ENCODE measurements at regions of chr19 and their contacts with region 1.

Region 1: GRCh38 chr19:55653758-55654539 is 886 bp upstream of the U2AF2 start:
- DNase-seq: peak; percentile 99
- ATAC-seq: peak; percentile 85
- H3K4me3 ChIP-seq: peak overlapping the region; percentile 85 to 99 (median 97)
- H3K27ac ChIP-seq: peak overlapping the region; percentile 99
- H3K4me1 ChIP-seq: peaks cover 30% of the 10 kb centered on the region
- H3K27me3 ChIP-seq: no peaks in the 10 kb centered on the region; a peak in 1 of 5 replicates
- CTCF ChIP-seq: peak; percentile 99
- EP300 ChIP-seq: 0 out of 4 replicates have a peak, but pooled peaks of 1 of the 2 experiments have one; percentile 35
- POLR2A ChIP-seq: peak; percentile 54 to 80; a peak in 3 of 4 replicates
- RAD21 ChIP-seq: peak; percentile 79

Region 2: GRCh38 chr19:55611983-55612645 is 41.8 kb before region 1 on chr19:
- CTCF ChIA-PET with region 1: no interaction called
- POLR2A ChIA-PET with region 1: no interaction called
- in situ Hi-C with region 1: no loop called
- intact Hi-C with region 1: no loop called
- DNase-seq: no peak
- ATAC-seq: no peak
- H3K4me3 ChIP-seq: no peak overlapping the region
- H3K27ac ChIP-seq: no peak overlapping the region
- H3K4me1 ChIP-seq: peaks cover 9% of the 10 kb centered on the region
- H3K27me3 ChIP-seq: no peaks in the 10 kb centered on the region
- CTCF ChIP-seq: no peak
- EP300 ChIP-seq: no peak
- POLR2A ChIP-seq: no peak
- RAD21 ChIP-seq: no peak

Region 3: DNA sequence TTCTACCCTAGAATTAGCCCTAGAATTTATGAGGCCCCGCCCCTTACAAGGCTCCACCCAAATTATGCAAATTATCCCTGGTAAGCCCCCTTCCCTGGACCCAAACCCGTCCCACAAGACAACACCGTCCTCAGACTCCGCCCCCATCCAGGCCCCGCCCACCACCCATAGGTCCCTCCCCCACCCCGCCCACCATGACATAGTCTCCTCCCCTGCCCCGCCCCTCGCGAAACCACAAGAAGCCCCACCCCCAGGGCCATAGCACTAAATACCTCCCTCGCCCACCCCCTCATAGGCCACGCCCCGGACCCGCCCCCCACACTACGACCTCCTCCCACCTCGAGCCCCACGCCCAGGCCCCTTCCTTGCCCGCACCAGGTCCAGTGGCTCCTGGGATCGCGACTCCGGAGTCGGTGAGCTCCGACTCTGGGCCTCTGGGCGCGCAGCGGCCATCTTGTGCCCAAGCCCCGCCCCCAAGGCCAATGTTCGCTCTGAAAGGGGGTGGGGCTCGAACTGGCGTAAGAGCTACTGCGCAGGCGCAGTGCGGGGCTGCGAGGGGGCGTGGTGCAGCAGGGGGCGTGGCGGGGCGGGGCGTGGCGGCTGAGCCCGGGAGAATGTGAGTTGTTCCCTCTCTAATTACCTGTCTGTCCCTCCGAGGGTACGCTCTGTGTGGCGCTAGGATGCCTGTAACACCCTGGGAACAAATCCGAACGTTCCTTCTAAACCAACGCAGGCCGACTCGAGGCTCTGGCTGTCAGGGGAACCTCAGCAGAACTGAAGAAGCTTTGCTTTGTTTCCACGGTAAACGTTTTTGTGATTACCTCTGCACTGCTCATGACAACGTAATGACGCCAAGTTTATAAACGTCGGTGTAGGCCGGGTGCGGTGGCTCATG is 29.6 kb before region 1 on chr19 and contains the start of gene ZNF784:
- CTCF ChIA-PET with region 1: no interaction called
- POLR2A ChIA-PET with region 1: interaction called, 11 read pairs
- in situ Hi-C with region 1: no loop called
- intact Hi-C with region 1: no loop called
- DNase-seq: peak; percentile 82
- ATAC-seq: peak; percentile 70
- H3K4me3 ChIP-seq: peak within 1 kb of the TSS; percentile 65 to 82 (median 70)
- H3K27ac ChIP-seq: peak within 1 kb of the TSS; percentile 98
- H3K4me1 ChIP-seq: peaks cover 27% of the 10 kb centered on the region
- H3K27me3 ChIP-seq: no peaks in the 10 kb centered on the region
- CTCF ChIP-seq: peak; percentile 22; the same call in 1 of the 2 replicates
- EP300 ChIP-seq: no peak
- POLR2A ChIP-seq: peak; percentile 74 to 88
- RAD21 ChIP-seq: no peak
- total RNA-seq, gene ZNF784: 4.0 and 4.2 TPM in 2 replicates

Region 4: DNA sequence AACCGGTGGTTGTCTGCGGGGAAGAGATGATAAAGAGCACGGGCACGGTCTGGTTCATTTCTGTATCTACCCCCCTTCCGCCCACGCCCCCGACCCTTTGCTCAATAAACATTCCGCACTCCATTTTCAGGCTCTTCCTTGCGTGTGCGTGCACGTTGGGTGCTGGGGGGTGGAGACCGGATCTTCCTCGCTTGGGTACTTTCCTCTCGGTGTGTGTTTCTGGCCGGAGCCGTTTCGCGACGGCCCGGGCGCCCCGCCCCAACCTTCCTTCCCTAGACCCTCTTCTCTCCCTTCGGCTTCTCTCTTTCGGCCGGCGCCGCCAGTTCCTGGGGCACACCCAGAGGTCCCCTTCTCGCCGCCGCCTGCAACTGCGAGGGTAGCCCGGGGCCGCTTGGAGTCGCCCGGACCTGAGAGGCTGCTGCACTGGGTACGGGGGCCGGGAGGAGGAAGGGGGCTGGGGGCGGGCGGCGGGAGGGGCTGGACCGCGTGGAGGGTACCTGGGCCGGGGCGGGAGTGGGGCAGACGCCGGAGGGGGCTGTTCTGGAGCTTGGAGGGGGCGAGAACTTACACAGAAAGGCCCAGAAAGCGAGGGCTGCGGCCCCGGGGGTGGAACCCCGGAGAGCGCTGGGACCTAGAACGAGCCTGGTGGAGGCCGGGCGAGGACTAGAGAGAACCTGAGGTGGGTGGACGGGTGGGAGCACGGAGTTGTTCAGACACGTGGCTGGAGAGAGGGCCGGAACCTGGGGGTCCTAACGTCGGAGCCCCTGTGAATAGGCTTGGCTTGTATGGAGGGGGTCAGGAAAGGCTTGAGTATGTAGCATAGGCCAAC is 10.4 kb before region 1 on chr19 and contains the start of gene ZNF581:
- CTCF ChIA-PET with region 1: interaction called, 3 read pairs
- POLR2A ChIA-PET with region 1: interaction called, 19 read pairs
- in situ Hi-C with region 1: no loop called
- intact Hi-C with region 1: no loop called
- DNase-seq: peak; percentile 57
- ATAC-seq: peak; percentile 47
- H3K4me3 ChIP-seq: peak within 1 kb of the TSS; percentile 92 to 96 (median 92)
- H3K27ac ChIP-seq: peak within 1 kb of the TSS; percentile 79
- H3K4me1 ChIP-seq: peaks cover 59% of the 10 kb centered on the region
- H3K27me3 ChIP-seq: no peaks in the 10 kb centered on the region; a peak in 1 of 5 replicates
- CTCF ChIP-seq: no peak
- EP300 ChIP-seq: no peak
- POLR2A ChIP-seq: no peak; a peak in 2 of 4 replicates
- RAD21 ChIP-seq: no peak
- total RNA-seq, gene ZNF581: 18.4 and 19.6 TPM in 2 replicates

Region 5: GRCh38 chr19:55670280-55671053 is 16.5 kb after region 1 on chr19:
- CTCF ChIA-PET with region 1: interaction called, 7 read pairs
- POLR2A ChIA-PET with region 1: interaction called, 14 read pairs
- in situ Hi-C with region 1: no loop called
- intact Hi-C with region 1: no loop called
- DNase-seq: no peak
- ATAC-seq: peak; percentile 20; the same call in 2 of the 3 replicates
- H3K4me3 ChIP-seq: no peak overlapping the region
- H3K27ac ChIP-seq: no peak overlapping the region
- H3K4me1 ChIP-seq: peaks cover 23% of the 10 kb centered on the region
- H3K27me3 ChIP-seq: no peaks in the 10 kb centered on the region; a peak in 1 of 5 replicates
- CTCF ChIP-seq: no peak
- EP300 ChIP-seq: no peak
- POLR2A ChIP-seq: peak in 1 of 2 experiments; percentile 34; a peak in 2 of 4 replicates
- RAD21 ChIP-seq: no peak

Region 6: GRCh38 chr19:55683449-55684261 is 29.7 kb after region 1 on chr19:
- CTCF ChIA-PET with region 1: no interaction called
- POLR2A ChIA-PET with region 1: interaction called, 27 read pairs
- in situ Hi-C with region 1: no loop called
- intact Hi-C with region 1: no loop called
- DNase-seq: peak; percentile 90
- ATAC-seq: peak; percentile 94
- H3K4me3 ChIP-seq: peak overlapping the region; percentile 30 to 61 (median 35)
- H3K27ac ChIP-seq: peak overlapping the region; percentile 89
- H3K4me1 ChIP-seq: peaks cover 74% of the 10 kb centered on the region
- H3K27me3 ChIP-seq: no peaks in the 10 kb centered on the region
- CTCF ChIP-seq: no peak
- EP300 ChIP-seq: peak in 1 of 2 experiments; percentile 27; a peak in 1 of 4 replicates
- POLR2A ChIP-seq: peak; percentile 66 to 85
- RAD21 ChIP-seq: no peak

Region 7: DNA sequence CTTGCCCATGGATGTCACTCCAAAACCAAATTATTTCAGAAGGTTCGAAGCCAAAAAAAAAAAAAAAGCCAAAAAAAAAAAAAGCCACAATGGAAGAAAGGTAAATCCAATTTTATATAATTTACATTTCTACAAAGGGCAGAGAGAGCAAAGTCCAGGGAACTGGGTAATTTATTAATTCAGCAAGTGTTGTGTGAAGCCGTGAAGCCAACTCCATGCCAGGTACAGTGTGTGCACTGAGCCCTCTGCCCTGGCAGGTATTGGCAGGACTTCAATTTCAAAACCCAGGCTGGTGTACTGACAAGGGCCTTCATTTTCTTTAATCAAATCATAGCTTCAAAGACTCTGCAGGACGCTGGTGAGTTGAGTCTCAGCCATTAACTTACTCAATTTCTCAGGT is 99.5 kb after region 1 on chr19:
- CTCF ChIA-PET with region 1: no interaction called
- POLR2A ChIA-PET with region 1: no interaction called
- in situ Hi-C with region 1: no loop called
- intact Hi-C with region 1: no loop called
- DNase-seq: no peak
- ATAC-seq: no peak
- H3K4me3 ChIP-seq: no peak overlapping the region
- H3K27ac ChIP-seq: no peak overlapping the region
- H3K4me1 ChIP-seq: no peaks in the 10 kb centered on the region
- H3K27me3 ChIP-seq: peaks cover 0 to 19% of the 10 kb centered on the region in 2 experiments; a peak in 2 of 5 replicates
- CTCF ChIP-seq: no peak
- EP300 ChIP-seq: no peak
- POLR2A ChIP-seq: no peak
- RAD21 ChIP-seq: no peak

Measured in HepG2 (cell line).